Psoas muscle (tissue), 8 donors: ENCODE measurements at regions of chr5 and their contacts with region 1.

Region 1: DNA sequence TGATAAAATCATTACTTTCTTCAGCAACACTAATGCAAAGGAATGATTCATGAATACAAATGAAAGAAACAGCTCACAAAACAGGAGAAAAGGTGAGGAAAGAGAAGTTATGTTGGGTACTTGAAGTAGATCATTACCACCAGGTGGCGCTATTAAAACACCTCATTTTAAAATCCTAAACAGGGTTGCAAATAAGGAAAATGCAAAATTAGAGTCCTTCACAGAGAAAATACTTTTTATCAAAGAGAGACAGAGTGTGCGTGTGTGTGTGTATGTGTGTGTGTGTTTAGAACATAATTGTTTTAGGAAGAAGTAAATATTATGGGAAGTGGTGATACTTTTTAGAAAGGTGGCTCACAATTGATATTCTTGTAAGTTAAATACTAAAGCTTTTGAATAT is 49.5 kb upstream of the CD180 start:
- DNase-seq: no peak
- ATAC-seq: peak; percentile 48 to 76 (median 54)
- H3K4me3 ChIP-seq: no peak overlapping the region
- H3K27ac ChIP-seq: no peak overlapping the region
- H3K4me1 ChIP-seq: peaks cover 20% of the 10 kb centered on the region
- H3K27me3 ChIP-seq: no peaks in the 10 kb centered on the region
- CTCF ChIP-seq: peak; percentile 84

Region 2: GRCh38 chr5:67206461-67206860 is 39.6 kb before region 1 on chr5:
- intact Hi-C with region 1: no loop called
- DNase-seq: no peak
- ATAC-seq: no peak
- H3K4me3 ChIP-seq: no peak overlapping the region
- H3K27ac ChIP-seq: no peak overlapping the region
- H3K4me1 ChIP-seq: no peaks in the 10 kb centered on the region
- H3K27me3 ChIP-seq: no peaks in the 10 kb centered on the region
- CTCF ChIP-seq: no peak

Region 3: DNA sequence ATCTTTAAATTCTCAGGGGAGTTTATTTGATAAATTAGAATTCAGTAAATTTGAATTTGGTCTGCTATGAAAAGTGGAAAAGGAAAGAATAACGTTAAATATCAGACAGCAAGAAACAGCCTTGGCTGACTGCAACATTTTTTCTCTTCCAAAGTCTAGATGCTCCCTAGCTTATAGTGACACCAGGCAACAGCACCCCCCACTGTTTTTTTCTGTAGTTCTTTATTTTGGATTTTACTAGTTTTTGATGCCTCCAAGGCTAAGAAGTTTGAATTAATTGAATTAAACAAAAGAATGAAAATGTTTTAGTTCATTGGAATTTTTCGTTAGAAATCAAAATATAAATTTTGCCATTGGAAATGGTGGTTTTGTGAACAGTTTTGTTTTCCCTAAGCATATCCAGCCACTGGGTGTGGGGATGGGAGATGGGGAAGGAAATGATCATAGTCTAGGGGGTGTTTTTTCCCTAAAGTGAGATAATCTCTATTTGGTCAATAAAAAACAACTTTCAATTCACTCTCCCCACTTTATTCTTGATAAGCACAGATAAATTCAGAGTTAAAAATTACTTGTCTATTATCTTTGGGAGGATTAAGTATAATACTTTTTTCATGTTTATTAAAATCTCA is 149.8 kb after region 1 on chr5:
- intact Hi-C with region 1: loop called in 1 of 2 experiments (anchors 10 kb)
- DNase-seq: no peak
- ATAC-seq: no peak
- H3K4me3 ChIP-seq: no peak overlapping the region
- H3K27ac ChIP-seq: no peak overlapping the region
- H3K4me1 ChIP-seq: peaks cover 7% of the 10 kb centered on the region
- H3K27me3 ChIP-seq: no peaks in the 10 kb centered on the region
- CTCF ChIP-seq: peak; percentile 10

Region 4: GRCh38 chr5:67453111-67453905 is 207.2 kb after region 1 on chr5:
- intact Hi-C with region 1: loop called in 1 of 2 experiments (anchors 10 kb)
- DNase-seq: no peak
- ATAC-seq: peak in 1 of 4 donors; percentile 17
- H3K4me3 ChIP-seq: no peak overlapping the region
- H3K27ac ChIP-seq: no peak overlapping the region
- H3K4me1 ChIP-seq: no peaks in the 10 kb centered on the region
- H3K27me3 ChIP-seq: no peaks in the 10 kb centered on the region
- CTCF ChIP-seq: no peak

Region 5: GRCh38 chr5:67636091-67636490 is 390.0 kb after region 1 on chr5:
- intact Hi-C with region 1: loop called in 1 of 2 experiments (anchors 10 kb)
- DNase-seq: peak; percentile 64 to 86
- ATAC-seq: peak; percentile 84 to 94 (median 91)
- H3K4me3 ChIP-seq: no peak overlapping the region
- H3K27ac ChIP-seq: peak overlapping the region; percentile 20
- H3K4me1 ChIP-seq: peaks cover 20% of the 10 kb centered on the region
- H3K27me3 ChIP-seq: no peaks in the 10 kb centered on the region
- CTCF ChIP-seq: no peak

Region 6: DNA sequence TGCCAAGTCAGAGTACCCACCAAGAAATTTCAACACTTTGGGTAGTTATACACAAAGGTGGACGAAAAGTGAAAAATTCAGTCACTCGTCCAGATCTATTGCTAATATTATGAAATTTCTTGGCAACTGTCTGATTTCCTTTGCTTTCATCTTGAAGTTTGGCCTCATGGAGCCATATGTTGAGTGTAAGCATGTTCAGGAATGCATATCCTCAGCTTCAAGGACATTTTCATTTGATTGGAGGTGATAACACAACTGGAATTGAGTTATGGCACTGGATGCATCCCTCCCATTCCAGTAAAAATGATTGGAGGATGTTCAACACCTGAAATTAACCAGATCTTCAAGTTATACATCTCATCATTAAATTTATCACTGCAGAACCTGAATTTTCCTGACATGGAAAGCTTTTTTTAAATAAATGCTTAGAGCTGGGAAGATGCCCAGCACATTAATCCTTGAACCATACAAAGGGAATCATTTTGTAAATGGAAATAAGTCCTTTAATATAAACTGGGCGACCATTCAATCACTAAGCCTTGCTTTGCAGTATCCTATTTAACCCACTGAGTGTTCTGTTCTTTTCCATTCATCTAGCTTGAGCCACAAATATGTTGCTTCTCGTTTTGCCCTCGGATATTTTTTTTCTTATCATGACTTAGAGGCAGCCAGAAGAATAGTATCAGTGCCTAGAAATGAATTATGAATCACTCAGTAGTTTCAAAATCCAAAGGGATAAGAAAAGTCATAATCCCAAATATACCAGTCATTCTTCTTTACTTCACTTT is 695.7 kb after region 1 on chr5:
- intact Hi-C with region 1: no loop called
- DNase-seq: no peak
- ATAC-seq: no peak
- H3K4me3 ChIP-seq: no peak overlapping the region
- H3K27ac ChIP-seq: no peak overlapping the region
- H3K4me1 ChIP-seq: no peaks in the 10 kb centered on the region
- H3K27me3 ChIP-seq: peaks cover 0 to 2% (median 0%) of the 10 kb centered on the region in 3 donors
- CTCF ChIP-seq: no peak

Region 7: DNA sequence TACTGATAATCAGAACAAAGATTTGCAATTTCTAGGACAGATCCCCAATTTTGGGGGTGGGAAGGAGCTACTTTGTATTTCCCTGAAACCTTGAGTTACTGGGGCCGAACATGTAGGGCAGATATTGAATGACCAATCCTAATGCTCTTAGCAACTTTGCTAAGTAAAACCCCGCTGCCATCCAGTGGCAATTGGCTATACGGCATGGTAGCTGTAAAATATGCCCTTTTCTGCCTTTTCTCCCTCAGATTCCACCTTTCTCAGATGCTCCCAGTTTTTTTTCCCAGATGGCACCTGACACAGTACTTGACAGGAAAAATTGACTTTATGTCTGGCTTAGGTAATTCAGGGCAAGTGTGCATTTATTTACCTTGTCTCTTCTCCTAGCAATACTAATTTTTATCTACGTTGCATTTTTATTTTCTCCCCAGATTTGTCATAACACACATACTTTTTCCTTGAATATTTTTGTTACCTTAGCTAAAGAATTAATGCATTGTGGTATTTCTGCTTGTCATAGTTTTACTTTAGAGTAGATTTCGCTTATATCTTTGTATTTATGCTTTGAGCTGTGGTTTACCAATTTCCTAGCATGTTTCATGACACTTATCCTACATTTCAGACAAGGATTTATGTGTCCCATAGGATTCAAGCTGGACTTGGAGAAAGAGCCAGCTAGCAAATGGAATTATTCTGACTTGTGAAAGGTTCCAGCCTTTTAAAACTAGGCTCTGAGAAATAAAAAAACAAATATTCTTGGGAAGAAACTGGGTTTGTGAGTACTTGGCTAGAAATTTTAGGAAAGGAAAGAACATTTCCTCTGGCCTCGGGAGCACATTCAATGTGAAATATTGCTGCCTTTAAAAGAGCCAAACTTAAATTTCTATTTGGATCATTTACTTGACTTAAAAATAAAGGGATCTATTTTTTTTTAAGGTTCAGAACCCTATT is 1006.8 kb after region 1 on chr5:
- intact Hi-C with region 1: loop called (anchors 2 to 10 kb)
- DNase-seq: peak; percentile 32 to 60
- ATAC-seq: peak; percentile 80 to 86 (median 83)
- H3K4me3 ChIP-seq: peak overlapping the region; percentile 46
- H3K27ac ChIP-seq: peak overlapping the region; percentile 72
- H3K4me1 ChIP-seq: peaks cover 94% of the 10 kb centered on the region
- H3K27me3 ChIP-seq: no peaks in the 10 kb centered on the region
- CTCF ChIP-seq: peak; percentile 86

Region 8: GRCh38 chr5:68460147-68460798 is 1214.2 kb after region 1 on chr5:
- intact Hi-C with region 1: loop called in 1 of 2 experiments (anchors 10 kb)
- DNase-seq: no peak
- ATAC-seq: peak in 3 of 4 donors; percentile 57 to 74 (median 64)
- H3K4me3 ChIP-seq: no peak overlapping the region
- H3K27ac ChIP-seq: no peak overlapping the region
- H3K4me1 ChIP-seq: peaks cover 6% of the 10 kb centered on the region
- H3K27me3 ChIP-seq: no peaks in the 10 kb centered on the region
- CTCF ChIP-seq: peak; percentile 68